HepG2 (cell line): ENCODE measurements at regions of chr4 and their contacts with region 1.

Region 1: GRCh38 chr4:15457406-15458201 is 12.1 kb upstream of the CC2D2A start:
- DNase-seq: peak; percentile 24
- ATAC-seq: peak; percentile 80
- H3K4me3 ChIP-seq: no peak overlapping the region
- H3K27ac ChIP-seq: no peak overlapping the region
- H3K4me1 ChIP-seq: no peaks in the 10 kb centered on the region
- H3K27me3 ChIP-seq: no peaks in the 10 kb centered on the region
- CTCF ChIP-seq: peak; percentile 69
- EP300 ChIP-seq: no peak
- POLR2A ChIP-seq: no peak
- RAD21 ChIP-seq: no peak

Region 2: DNA sequence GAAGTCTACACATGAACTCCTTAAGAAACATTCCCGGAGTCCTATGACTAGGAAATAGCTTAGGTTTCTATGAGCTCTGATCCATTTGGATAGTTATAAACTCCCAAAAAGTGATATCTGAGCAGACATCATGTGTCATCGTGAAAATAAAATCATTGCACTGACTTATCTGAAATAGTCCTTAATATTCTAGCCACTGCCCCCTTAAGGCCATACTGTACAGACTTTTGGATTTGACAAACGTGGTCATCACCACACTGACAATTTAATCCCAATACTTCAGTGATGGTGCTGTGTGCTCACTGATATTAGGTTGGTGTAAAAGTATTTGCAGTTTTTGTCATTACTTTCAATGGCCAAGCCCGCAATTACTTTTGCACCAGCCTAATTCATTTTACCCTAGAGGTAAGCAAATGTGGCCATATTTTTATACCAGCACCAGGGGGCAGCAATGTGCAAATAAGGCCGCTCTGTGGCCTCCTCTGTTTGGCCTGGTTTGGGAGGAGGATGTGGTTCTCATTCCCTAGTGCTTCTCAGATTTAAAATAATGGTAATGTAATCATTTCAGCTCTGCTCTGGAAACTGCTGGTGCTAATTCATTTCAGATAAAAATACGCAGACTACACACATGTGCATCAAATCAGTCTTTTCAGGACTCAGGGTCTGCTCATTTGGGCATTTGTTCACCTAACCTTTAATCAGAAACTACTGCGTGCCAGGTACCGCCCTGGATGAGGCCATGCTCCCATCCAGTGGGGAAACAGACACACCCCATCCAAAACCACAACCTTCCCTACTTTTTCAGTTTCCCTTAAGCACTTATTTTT is 226.1 kb before region 1 on chr4:
- CTCF ChIA-PET with region 1: interaction called, 3 read pairs
- POLR2A ChIA-PET with region 1: no interaction called
- in situ Hi-C with region 1: loop called (anchors 5 kb)
- intact Hi-C with region 1: loop called (anchors 1 kb)
- DNase-seq: peak; percentile 68
- ATAC-seq: peak; percentile 96
- H3K4me3 ChIP-seq: no peak overlapping the region
- H3K27ac ChIP-seq: no peak overlapping the region
- H3K4me1 ChIP-seq: peaks cover 11% of the 10 kb centered on the region; the same call in 1 of the 2 replicates
- H3K27me3 ChIP-seq: no peaks in the 10 kb centered on the region
- CTCF ChIP-seq: peak; percentile 72
- EP300 ChIP-seq: no peak
- POLR2A ChIP-seq: no peak
- RAD21 ChIP-seq: peak; percentile 39; the same call in 1 of the 2 replicates

Region 3: GRCh38 chr4:15238720-15239119 is 218.9 kb before region 1 on chr4:
- CTCF ChIA-PET with region 1: interaction called, 6 read pairs
- POLR2A ChIA-PET with region 1: no interaction called
- in situ Hi-C with region 1: loop called (anchors 5 kb)
- intact Hi-C with region 1: no loop called
- DNase-seq: peak; percentile 5
- ATAC-seq: peak; percentile 86
- H3K4me3 ChIP-seq: no peak overlapping the region
- H3K27ac ChIP-seq: no peak overlapping the region
- H3K4me1 ChIP-seq: no peaks in the 10 kb centered on the region
- H3K27me3 ChIP-seq: no peaks in the 10 kb centered on the region
- CTCF ChIP-seq: peak; percentile 61
- EP300 ChIP-seq: no peak
- POLR2A ChIP-seq: no peak
- RAD21 ChIP-seq: peak; percentile 44; the same call in 1 of the 2 replicates

Region 4: DNA sequence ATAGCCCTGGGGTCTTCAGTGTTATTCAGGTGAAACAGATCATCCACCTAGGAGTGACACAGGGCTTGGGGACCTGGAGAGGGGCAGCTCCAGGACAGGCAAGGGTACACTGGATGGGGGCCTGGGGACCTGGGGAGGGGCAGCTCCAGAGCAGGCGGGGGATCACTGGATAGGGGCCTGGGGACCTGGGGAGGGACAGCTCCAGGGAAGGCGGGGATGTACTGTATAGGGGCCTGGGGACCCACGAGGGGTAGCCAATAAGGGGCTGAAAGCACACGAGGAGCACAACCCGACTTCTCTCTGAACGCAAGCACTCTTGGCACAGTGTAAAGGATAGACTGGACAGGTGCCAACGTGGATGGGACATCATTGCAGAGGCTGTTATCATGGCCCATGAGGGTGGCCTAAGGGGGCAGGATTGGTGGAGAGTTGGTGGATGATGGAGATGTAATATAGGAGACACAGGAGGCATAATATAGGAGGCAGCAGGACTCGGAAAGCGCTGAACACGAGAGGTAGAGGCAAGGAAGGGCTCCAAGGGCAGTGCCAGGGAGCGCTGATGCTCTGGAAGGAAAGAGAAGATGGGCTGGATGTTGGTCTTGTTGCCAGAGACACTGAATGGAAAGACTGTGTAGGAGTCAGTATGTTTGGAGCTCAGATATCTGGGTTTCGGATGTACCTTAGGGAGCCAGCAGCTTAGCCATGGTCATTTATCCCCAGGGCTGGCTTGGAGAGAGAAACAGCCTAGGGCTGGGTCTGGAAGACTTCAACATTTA is 543.3 kb after region 1 on chr4:
- CTCF ChIA-PET with region 1: no interaction called
- POLR2A ChIA-PET with region 1: no interaction called
- in situ Hi-C with region 1: no loop called
- intact Hi-C with region 1: no loop called
- DNase-seq: no peak
- ATAC-seq: peak; percentile 62
- H3K4me3 ChIP-seq: no peak overlapping the region
- H3K27ac ChIP-seq: no peak overlapping the region
- H3K4me1 ChIP-seq: no peaks in the 10 kb centered on the region
- H3K27me3 ChIP-seq: no peaks in the 10 kb centered on the region
- CTCF ChIP-seq: no peak
- EP300 ChIP-seq: no peak
- POLR2A ChIP-seq: no peak
- RAD21 ChIP-seq: no peak